OCI-LY7 (cell line): ENCODE measurements at regions of chr14 and their contacts with region 1.

Region 1: GRCh38 chr14:74018586-74019407 is at the starts of genes BBOF1 and ENTPD5:
- DNase-seq: peak; percentile 84
- H3K4me3 ChIP-seq: peak within 1 kb of the TSS; percentile 86
- H3K27ac ChIP-seq: peak within 1 kb of the TSS; percentile 31
- H3K4me1 ChIP-seq: peaks cover 3% of the 10 kb centered on the region
- CTCF ChIP-seq: no peak
- total RNA-seq, gene BBOF1: 1.7 and 2.9 TPM in 2 replicates
- total RNA-seq, gene ENTPD5: 7.5 and 7.8 TPM in 2 replicates

Region 2: GRCh38 chr14:73758403-73759182 is 260.2 kb before region 1 on chr14:
- CTCF ChIA-PET with region 1: no interaction called
- POLR2A ChIA-PET with region 1: no interaction called
- intact Hi-C with region 1: no loop called
- DNase-seq: peak; percentile 85
- H3K4me3 ChIP-seq: peak overlapping the region; percentile 78
- H3K27ac ChIP-seq: peak overlapping the region; percentile 88
- H3K4me1 ChIP-seq: peaks cover 77% of the 10 kb centered on the region
- CTCF ChIP-seq: peak; percentile 82

Region 3: GRCh38 chr14:73862480-73862879 is 156.3 kb before region 1 on chr14:
- CTCF ChIA-PET with region 1: no interaction called
- POLR2A ChIA-PET with region 1: no interaction called
- intact Hi-C with region 1: no loop called
- DNase-seq: no peak
- H3K4me3 ChIP-seq: no peak overlapping the region
- H3K27ac ChIP-seq: no peak overlapping the region
- H3K4me1 ChIP-seq: no peaks in the 10 kb centered on the region
- CTCF ChIP-seq: no peak

Region 4: DNA sequence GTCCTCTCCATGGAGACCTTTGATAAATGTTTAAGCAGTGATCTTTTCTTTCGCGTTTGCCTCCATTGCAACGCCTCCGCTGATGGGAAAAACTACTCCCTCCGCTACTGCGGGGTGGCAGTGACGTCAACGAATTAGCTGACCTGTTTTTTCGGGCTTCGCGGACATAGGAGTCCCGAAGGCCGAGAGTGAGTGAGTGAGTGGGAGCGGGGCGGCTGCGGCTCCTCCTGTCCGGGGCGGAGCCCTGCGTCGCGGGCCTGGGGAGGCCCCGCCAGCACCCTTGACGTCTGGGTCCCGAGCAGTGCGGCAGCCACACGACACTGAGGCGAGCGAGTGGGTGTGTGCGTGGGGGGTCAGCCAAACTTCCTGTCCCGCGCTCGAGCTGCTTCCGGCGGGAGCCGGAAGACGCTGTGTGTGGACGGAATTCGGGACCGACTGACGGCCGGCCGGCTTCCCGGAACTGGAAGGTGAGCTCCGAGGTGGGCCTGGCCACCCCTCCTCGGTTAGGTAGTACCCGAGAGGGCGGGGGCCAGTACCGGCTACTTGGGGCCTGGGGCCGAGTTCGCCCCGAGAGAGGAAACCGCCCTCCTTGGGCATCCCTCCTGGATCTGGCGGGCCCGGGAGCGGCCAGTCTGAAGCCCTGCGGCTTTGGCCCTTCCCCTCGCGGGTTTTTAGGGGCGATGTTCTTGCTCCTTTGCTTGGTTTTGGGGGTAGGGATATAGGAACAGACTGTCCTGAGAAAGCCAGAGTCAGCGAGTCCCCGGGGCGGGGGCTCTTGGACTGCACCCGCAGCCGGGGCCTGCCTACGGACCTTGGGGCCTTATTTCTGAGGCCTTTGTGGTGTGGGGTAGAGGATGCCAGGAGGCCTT is 132.1 kb before region 1 on chr14 and contains the start of gene ZNF410:
- CTCF ChIA-PET with region 1: no interaction called
- POLR2A ChIA-PET with region 1: no interaction called
- intact Hi-C with region 1: loop called (anchors 5 kb)
- DNase-seq: peak; percentile 88
- H3K4me3 ChIP-seq: peak within 1 kb of the TSS; percentile 98
- H3K27ac ChIP-seq: peak within 1 kb of the TSS; percentile 68
- H3K4me1 ChIP-seq: peaks cover 32% of the 10 kb centered on the region
- CTCF ChIP-seq: no peak
- total RNA-seq, gene ZNF410: 41.6 and 49.6 TPM in 2 replicates

Region 5: GRCh38 chr14:73949744-73950734 is 68.8 kb before region 1 on chr14 and contains the starts of genes COQ6 and FAM161B:
- CTCF ChIA-PET with region 1: no interaction called
- POLR2A ChIA-PET with region 1: no interaction called
- intact Hi-C with region 1: loop called (anchors 5 kb)
- DNase-seq: peak; percentile 95
- H3K4me3 ChIP-seq: peak within 1 kb of the TSS; percentile 75
- H3K27ac ChIP-seq: peak within 1 kb of the TSS; percentile 51
- H3K4me1 ChIP-seq: peaks cover 15% of the 10 kb centered on the region
- CTCF ChIP-seq: peak; percentile 61
- total RNA-seq, gene COQ6: 18.7 and 35.4 TPM in 2 replicates
- total RNA-seq, gene FAM161B: 2.3 and 2.6 TPM in 2 replicates

Region 6: DNA sequence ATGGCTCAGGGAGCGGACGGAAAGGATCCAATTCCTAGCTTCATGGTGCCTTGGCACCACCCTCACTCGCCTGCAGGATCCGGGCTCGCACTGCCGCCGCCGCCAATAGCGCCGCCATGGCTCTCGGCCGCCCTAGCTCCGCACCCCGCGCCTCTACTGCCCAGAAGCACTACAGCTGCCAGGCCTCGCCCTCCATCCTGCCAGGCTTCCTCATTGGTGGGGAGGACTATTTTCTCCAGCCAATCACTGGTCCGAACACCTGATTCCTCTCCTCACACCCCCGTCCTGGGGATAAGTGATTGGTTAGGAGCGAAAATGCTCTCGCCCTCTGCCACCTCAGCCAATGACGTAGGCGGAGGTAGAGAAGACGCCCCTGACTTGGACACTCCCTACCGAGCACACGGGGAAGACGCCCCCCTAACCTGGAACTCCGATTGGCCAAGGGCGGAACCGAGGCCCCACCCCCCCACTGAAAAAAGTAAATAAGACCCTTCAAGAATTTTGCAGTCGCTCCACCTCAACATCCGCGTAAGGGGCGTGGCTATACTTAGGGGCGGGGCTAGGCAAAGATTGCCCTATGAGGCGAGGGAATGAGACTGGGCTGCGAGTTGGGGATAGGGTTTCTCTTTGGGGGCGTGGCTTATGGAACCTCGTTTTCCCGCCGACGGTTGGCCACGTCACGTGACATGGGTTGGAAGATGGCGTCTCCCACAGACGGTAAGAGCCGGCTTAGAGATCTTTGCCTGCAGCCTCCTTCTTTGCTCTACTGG is 65.7 kb after region 1 on chr14 and contains the starts of genes ALDH6A1 and LIN52:
- CTCF ChIA-PET with region 1: no interaction called
- POLR2A ChIA-PET with region 1: interaction called, 3 read pairs
- intact Hi-C with region 1: loop called (anchors 2 kb)
- DNase-seq: peak; percentile 100
- H3K4me3 ChIP-seq: peak within 1 kb of the TSS; percentile 79
- H3K27ac ChIP-seq: peak within 1 kb of the TSS; percentile 30
- H3K4me1 ChIP-seq: peaks cover 23% of the 10 kb centered on the region
- CTCF ChIP-seq: peak; percentile 51; the same call in 1 of the 2 replicates
- total RNA-seq, gene ALDH6A1: 16.6 and 17.0 TPM in 2 replicates
- total RNA-seq, gene LIN52: 9.8 and 12.3 TPM in 2 replicates